A549 (cell line): ENCODE measurements at regions of chr17 and their contacts with region 1.

Region 1: GRCh38 chr17:40791787-40792436 is 7.8 kb downstream of the KRT28 start:
- DNase-seq: peak; percentile 45 to 61
- ATAC-seq: peak; percentile 73 to 74
- H3K4me3 ChIP-seq: no peak overlapping the region
- H3K27ac ChIP-seq: no peak overlapping the region
- H3K4me1 ChIP-seq: no peaks in the 10 kb centered on the region
- CTCF ChIP-seq: peak; percentile 98
- EP300 ChIP-seq: no peak
- POLR2A ChIP-seq: no peak
- RAD21 ChIP-seq: peak; percentile 83 to 86

Region 2: GRCh38 chr17:40647624-40648383 is 144.1 kb before region 1 on chr17 and contains the start of gene SMARCE1:
- CTCF ChIA-PET with region 1: interaction called, 18 read pairs
- POLR2A ChIA-PET with region 1: no interaction called
- DNase-seq: peak; percentile 72 to 87
- ATAC-seq: peak; percentile 87 to 89
- H3K4me3 ChIP-seq: peak within 1 kb of the TSS; percentile 79
- H3K27ac ChIP-seq: peak within 1 kb of the TSS; percentile 91 to 92
- H3K4me1 ChIP-seq: peaks cover 26% of the 10 kb centered on the region
- CTCF ChIP-seq: no peak
- EP300 ChIP-seq: no peak
- POLR2A ChIP-seq: peak; percentile 70
- RAD21 ChIP-seq: no peak; a peak in 1 of 5 replicates
- polyA plus RNA-seq, gene SMARCE1: 87.9 and 111 TPM in 2 replicates

Region 3: GRCh38 chr17:40779181-40779909 is 12.6 kb before region 1 on chr17:
- CTCF ChIA-PET with region 1: interaction called, 20 read pairs
- POLR2A ChIA-PET with region 1: no interaction called
- DNase-seq: peak; percentile 45 to 53
- ATAC-seq: peak; percentile 93 to 94
- H3K4me3 ChIP-seq: peak overlapping the region; percentile 39
- H3K27ac ChIP-seq: peak overlapping the region in 1 of 2 experiments; percentile 62; a peak in 3 of 6 replicates
- H3K4me1 ChIP-seq: 0 out of 3 replicates have a peak, but pooled peaks cover 5% of the 10 kb centered on the region
- CTCF ChIP-seq: no peak
- EP300 ChIP-seq: no peak
- POLR2A ChIP-seq: no peak
- RAD21 ChIP-seq: no peak

Region 4: DNA sequence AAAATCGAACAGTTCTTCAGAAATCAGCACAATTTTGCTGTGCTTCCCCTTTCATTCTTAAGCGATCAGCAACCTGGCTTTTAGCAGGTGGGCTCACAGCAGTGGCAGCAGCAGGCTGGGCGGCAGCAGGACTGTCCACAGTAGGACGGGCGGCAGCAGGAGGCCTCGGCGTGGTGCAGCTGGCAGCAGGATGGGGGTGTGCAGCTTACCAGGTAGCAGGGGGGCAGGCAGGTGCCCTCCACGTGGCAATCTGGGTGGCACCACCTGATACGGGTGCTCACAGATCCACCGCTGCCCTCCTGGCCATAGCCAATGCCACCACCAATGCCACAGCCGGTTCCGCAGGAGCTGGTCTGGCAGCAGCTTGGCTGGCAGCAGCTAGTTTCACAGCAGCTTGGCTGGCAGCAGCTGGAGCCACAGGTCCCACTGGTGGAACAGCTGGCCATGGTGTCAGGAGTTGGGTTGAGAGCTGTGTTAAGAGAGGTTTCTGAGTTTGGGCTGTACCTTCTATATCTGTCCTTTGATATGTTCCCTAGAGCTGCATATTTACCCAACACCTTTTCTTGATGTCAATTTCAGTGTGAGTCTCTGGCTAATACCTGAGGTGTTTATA is 237.8 kb after region 1 on chr17 and contains the start of gene KRTAP1-4:
- CTCF ChIA-PET with region 1: no interaction called
- POLR2A ChIA-PET with region 1: no interaction called
- DNase-seq: no peak
- ATAC-seq: no peak
- H3K4me3 ChIP-seq: no peak within 1 kb of the TSS
- H3K27ac ChIP-seq: no peak within 1 kb of the TSS
- H3K4me1 ChIP-seq: peaks cover 8% of the 10 kb centered on the region; the same call in 1 of the 3 replicates
- CTCF ChIP-seq: no peak
- EP300 ChIP-seq: no peak
- POLR2A ChIP-seq: no peak
- RAD21 ChIP-seq: no peak
- polyA plus RNA-seq, gene KRTAP1-4: not detected in 2 replicates